ENCODE measurements at regions of chr5 and their contacts with region 1.

Region 1: GRCh38 chr5:133824661-133825254 is 143.7 kb downstream of the C5orf15 start:
- DNase-seq: no peak
- ATAC-seq: no peak
- H3K4me3 ChIP-seq: no peak overlapping the region
- H3K27ac ChIP-seq: peak overlapping the region in 1 of 4 donors; percentile 61
- H3K4me1 ChIP-seq: peaks cover 19 to 26% of the 10 kb centered on the region in 2 donors
- H3K27me3 ChIP-seq: no peaks in the 10 kb centered on the region
- CTCF ChIP-seq: no peak
- POLR2A ChIP-seq: no peak

Region 2: DNA sequence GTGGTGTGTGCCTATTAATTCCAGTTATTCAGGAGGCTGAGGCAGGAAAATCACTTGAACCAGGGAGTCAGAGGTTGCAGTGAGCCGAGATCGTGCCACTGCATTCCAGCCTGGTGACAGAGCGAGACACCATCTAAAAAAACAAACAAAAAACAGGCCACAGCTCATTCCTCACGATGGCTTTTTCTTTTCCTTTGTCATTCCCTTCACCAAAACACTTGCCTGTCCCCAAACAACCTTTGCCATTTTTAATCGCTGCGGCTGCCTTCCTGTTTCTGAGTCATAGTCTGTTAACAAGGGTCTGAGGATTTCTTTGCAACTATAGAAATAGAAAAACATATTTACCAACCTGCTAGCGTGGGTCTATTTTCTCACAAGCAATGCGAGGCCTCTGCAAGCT is 89.4 kb before region 1 on chr5:
- in situ Hi-C with region 1: no loop called
- intact Hi-C with region 1: no loop called
- DNase-seq: no peak
- ATAC-seq: no peak
- H3K4me3 ChIP-seq: no peak overlapping the region
- H3K27ac ChIP-seq: no peak overlapping the region
- H3K4me1 ChIP-seq: no peaks in the 10 kb centered on the region
- H3K27me3 ChIP-seq: no peaks in the 10 kb centered on the region
- CTCF ChIP-seq: no peak
- POLR2A ChIP-seq: no peak

Region 3: GRCh38 chr5:133779828-133780475 is 44.8 kb before region 1 on chr5:
- in situ Hi-C with region 1: no loop called
- intact Hi-C with region 1: loop called (anchors 2 kb)
- DNase-seq: peak in 1 of 2 donors; percentile 19
- ATAC-seq: peak; percentile 29 to 37
- H3K4me3 ChIP-seq: no peak overlapping the region
- H3K27ac ChIP-seq: peak overlapping the region; percentile 73 to 87 (median 78)
- H3K4me1 ChIP-seq: peaks cover 6 to 10% of the 10 kb centered on the region in 2 donors
- H3K27me3 ChIP-seq: no peaks in the 10 kb centered on the region
- CTCF ChIP-seq: no peak
- POLR2A ChIP-seq: no peak

Region 4: GRCh38 chr5:133952729-133953567 is 128.2 kb after region 1 on chr5:
- in situ Hi-C with region 1: no loop called
- intact Hi-C with region 1: loop called (anchors 2 kb)
- DNase-seq: peak; percentile 71 to 80
- ATAC-seq: peak; percentile 100
- H3K4me3 ChIP-seq: peak overlapping the region; percentile 16 to 35 (median 32)
- H3K27ac ChIP-seq: peak overlapping the region; percentile 73 to 86 (median 84)
- H3K4me1 ChIP-seq: peaks cover 14 to 15% of the 10 kb centered on the region in 2 donors
- H3K27me3 ChIP-seq: no peaks in the 10 kb centered on the region
- CTCF ChIP-seq: no peak
- POLR2A ChIP-seq: no peak

Region 5: GRCh38 chr5:133993231-133993949 is 168.6 kb after region 1 on chr5:
- in situ Hi-C with region 1: no loop called
- intact Hi-C with region 1: loop called (anchors 5 kb)
- DNase-seq: no peak
- ATAC-seq: peak in 1 of 2 donors; percentile 57
- H3K4me3 ChIP-seq: no peak overlapping the region
- H3K27ac ChIP-seq: peak overlapping the region; percentile 91 to 100 (median 98)
- H3K4me1 ChIP-seq: peaks cover 81 to 84% of the 10 kb centered on the region in 2 donors
- H3K27me3 ChIP-seq: no peaks in the 10 kb centered on the region
- CTCF ChIP-seq: no peak
- POLR2A ChIP-seq: no peak

Region 6: DNA sequence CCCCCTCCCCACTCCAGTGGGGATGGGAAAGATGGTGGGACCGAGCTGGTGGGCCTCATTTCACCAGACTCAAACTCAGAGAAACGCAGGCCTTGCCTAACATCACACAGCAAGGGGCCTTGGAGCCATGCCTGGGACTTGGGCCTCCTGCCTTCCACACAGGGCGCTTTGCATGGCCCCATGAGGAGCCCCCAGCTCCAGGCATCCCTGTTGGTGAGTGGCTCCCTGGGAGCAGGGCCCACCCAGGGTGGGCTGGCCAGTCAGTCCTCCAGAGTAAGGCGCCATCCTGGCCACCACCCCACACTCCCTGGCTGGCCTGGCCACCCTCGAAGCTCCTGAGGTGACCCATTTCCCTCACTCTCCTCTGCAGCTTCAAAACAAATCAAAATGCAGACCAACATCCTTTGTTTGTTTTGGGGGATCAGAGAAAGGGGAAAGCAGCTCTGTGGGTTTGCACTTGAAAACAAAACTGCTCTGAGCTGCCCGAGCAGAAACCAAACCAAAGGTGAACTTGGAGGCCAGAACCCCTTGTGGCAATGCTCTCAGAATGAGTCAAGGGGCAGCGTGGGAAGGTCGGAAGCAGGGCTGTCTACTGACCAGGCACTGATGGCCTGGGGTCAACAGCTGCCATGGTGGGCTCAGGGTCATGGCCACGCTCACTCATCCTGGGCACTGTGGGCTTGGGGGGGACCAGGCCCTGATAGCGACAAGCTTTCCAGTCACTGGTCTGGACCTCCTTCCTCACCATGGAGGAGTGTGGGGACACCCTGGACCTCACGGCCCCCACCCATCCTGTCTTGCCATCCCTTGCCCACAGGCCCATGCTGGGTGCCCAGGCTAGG is 217.0 kb after region 1 on chr5:
- in situ Hi-C with region 1: no loop called
- intact Hi-C with region 1: no loop called
- DNase-seq: no peak
- ATAC-seq: no peak
- H3K4me3 ChIP-seq: no peak overlapping the region
- H3K27ac ChIP-seq: no peak overlapping the region
- H3K4me1 ChIP-seq: no peaks in the 10 kb centered on the region
- H3K27me3 ChIP-seq: no peaks in the 10 kb centered on the region
- CTCF ChIP-seq: no peak
- POLR2A ChIP-seq: no peak